Panc1 (cell line): ENCODE measurements at regions of chr4 and their contacts with region 1.

Region 1: GRCh38 chr4:70505151-70505748 is 13.1 kb upstream of the AMTN start:
- DNase-seq: peak; percentile 39
- ATAC-seq: no peak
- H3K4me3 ChIP-seq: no peak overlapping the region
- H3K27ac ChIP-seq: no peak overlapping the region
- H3K4me1 ChIP-seq: no peaks in the 10 kb centered on the region
- H3K27me3 ChIP-seq: no peaks in the 10 kb centered on the region
- CTCF ChIP-seq: peak; percentile 91

Region 2: GRCh38 chr4:69896530-69897116 is 608.6 kb before region 1 on chr4:
- CTCF ChIA-PET with region 1: no interaction called
- POLR2A ChIA-PET with region 1: no interaction called
- in situ Hi-C with region 1: no loop called
- intact Hi-C with region 1: loop called (anchors 10 kb)
- DNase-seq: no peak
- ATAC-seq: no peak
- H3K4me3 ChIP-seq: no peak overlapping the region
- H3K27ac ChIP-seq: no peak overlapping the region
- H3K4me1 ChIP-seq: no peaks in the 10 kb centered on the region
- H3K27me3 ChIP-seq: no peaks in the 10 kb centered on the region
- CTCF ChIP-seq: peak; percentile 31; the same call in 1 of the 2 replicates